Sigmoid colon (tissue), 7 donors: ENCODE measurements at regions of chr1 and their contacts with region 1.

Region 1: DNA sequence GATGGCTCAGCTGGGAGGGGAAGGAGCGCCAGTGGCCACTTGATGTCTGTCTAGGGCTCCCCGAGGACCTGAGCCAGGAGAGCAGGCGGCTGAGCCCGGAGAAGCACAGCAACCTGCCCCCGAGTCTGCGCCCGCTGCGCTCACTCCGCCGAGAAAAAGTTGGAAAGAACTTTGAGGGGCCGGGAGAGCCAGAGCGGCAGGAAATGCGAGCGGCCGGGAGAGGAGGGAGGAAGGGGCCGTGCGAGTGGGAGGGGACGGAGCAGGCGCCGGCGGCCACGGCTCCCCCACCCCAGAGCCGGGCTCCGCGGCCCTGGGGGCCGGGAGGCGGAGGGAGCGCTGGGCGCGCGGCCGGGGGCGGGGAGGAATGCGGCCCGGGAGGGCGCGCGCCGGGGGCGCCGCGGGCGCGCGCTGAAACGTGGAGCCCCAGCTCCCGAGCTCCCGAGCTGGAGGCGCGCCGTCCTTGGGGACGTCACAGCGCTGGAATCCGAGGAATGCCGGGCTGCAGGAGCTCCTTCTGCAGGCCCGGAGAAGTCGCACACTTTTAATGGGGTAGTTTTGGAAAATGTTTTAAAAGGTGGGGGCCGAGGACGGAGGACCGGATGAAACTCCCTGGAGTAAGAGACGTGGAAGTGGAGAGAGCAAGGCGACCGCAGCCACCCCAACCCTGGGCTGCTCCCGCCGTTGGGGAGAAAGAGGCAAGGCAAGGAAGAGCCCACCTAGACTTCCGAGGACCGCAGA is at the start of gene PTPN14:
- DNase-seq: peak; percentile 95
- H3K4me3 ChIP-seq: peak within 1 kb of the TSS; percentile 67 to 92 (median 88)
- H3K27ac ChIP-seq: peak within 1 kb of the TSS; percentile 87 to 99 (median 98)
- H3K4me1 ChIP-seq: peaks cover 0 to 45% (median 36%) of the 10 kb centered on the region in 4 donors
- H3K27me3 ChIP-seq: no peaks in the 10 kb centered on the region
- CTCF ChIP-seq: peak in 2 of 4 experiments; percentile 16 to 17
- EP300 ChIP-seq: peak in 1 of 4 donors; percentile 23
- POLR2A ChIP-seq: peak; percentile 38 to 71
- total RNA-seq, gene PTPN14: 20.1 to 35.5 (median 33.1) TPM

Region 2: GRCh38 chr1:214389734-214390133 is 161.9 kb before region 1 on chr1:
- intact Hi-C with region 1: loop called (anchors 2 kb)
- DNase-seq: no peak
- H3K4me3 ChIP-seq: no peak overlapping the region
- H3K27ac ChIP-seq: no peak overlapping the region
- H3K4me1 ChIP-seq: peaks cover 0 to 10% (median 0%) of the 10 kb centered on the region in 4 donors
- H3K27me3 ChIP-seq: no peaks in the 10 kb centered on the region
- CTCF ChIP-seq: no peak
- EP300 ChIP-seq: no peak
- POLR2A ChIP-seq: no peak